Common myeloid progenitor, CD34-positive (primary cell): ENCODE measurements at regions of chr10 and their contacts with region 1.

Region 1: GRCh38 chr10:230737-231136 is 95.5 kb downstream of the ZMYND11 start:
- DNase-seq: peak; percentile 11 to 40 (median 35)
- H3K4me3 ChIP-seq: no peak overlapping the region
- H3K27ac ChIP-seq: no peak overlapping the region
- H3K4me1 ChIP-seq: no peaks in the 10 kb centered on the region
- H3K27me3 ChIP-seq: no peaks in the 10 kb centered on the region

Region 2: GRCh38 chr10:135132-135600 is 95.6 kb before region 1 on chr10 and contains the start of gene ZMYND11:
- CTCF ChIA-PET with region 1: no interaction called
- POLR2A ChIA-PET with region 1: no interaction called
- DNase-seq: peak; percentile 61 to 82 (median 71)
- H3K4me3 ChIP-seq: peak within 1 kb of the TSS; percentile 69 to 94 (median 82)
- H3K27ac ChIP-seq: peak within 1 kb of the TSS; percentile 72 to 92
- H3K4me1 ChIP-seq: peaks cover 12 to 26% (median 23%) of the 10 kb centered on the region in 4 experiments
- H3K27me3 ChIP-seq: no peaks in the 10 kb centered on the region

Region 3: DNA sequence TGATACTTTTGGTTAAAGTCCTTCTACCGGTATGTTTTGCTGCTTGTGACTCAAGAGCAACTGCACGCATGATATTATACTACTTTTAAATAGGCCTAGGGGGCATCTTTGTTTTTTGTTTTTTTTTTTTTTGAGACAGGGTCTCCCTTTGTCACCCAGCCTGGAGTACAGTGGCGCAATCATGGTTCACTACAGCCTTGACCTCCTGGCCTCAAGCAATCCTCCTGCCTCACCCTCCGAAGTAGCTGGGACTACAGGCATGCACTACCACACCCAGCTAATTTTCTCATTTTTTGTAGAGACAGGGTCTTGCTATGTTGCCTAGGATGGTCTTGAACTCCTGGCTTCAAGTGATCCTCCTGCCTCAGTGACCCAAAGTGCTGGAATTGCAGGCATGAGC is 15.3 kb before region 1 on chr10:
- CTCF ChIA-PET with region 1: interaction called, 16 read pairs
- POLR2A ChIA-PET with region 1: no interaction called
- DNase-seq: no peak
- H3K4me3 ChIP-seq: no peak overlapping the region
- H3K27ac ChIP-seq: no peak overlapping the region
- H3K4me1 ChIP-seq: peaks cover under 1 to 11% (median 7%) of the 10 kb centered on the region in 4 experiments
- H3K27me3 ChIP-seq: no peaks in the 10 kb centered on the region